ENCODE measurements at regions of chr9 and their contacts with region 1.

Region 1: DNA sequence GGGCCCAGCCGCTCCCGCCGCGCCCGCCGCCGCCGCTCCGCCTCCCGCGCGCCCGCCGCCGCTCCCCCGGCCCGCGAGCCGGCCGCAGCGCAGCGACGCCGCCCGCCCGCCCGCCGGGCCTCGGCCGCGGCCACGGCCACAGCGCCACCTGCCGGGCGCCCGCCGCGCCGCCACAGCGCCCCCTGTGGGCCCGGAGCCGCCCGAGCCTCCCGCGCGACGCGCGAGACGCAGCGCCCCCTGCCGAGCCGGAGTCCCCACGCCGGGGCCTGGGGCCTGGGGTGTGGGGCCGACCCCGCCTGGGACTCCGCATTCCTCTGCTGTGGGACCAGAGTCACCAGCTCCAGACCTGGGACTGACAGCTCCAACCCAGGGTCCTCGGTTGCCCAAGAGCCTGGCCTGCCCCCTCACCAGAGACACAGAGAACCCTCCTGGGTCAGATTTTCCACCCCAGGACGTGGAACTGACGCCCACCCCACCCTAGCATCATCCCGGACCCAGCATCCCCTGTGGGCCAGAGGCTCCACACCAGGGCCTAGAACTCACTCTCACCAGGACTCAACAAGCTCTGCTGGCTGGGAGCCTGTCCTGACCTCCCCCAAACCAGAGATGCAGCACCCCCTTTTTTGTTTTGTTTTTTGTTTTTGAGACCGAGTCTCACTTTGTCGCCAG is at the start of gene RAPGEF1:
- H3K4me3 Mint-ChIP-seq: peak within 1 kb of the TSS; percentile 93
- H3K27ac Mint-ChIP-seq: peak within 1 kb of the TSS; percentile 87
- H3K4me1 Mint-ChIP-seq: peaks cover 58% of the 10 kb centered on the region
- H3K27me3 Mint-ChIP-seq: no peaks in the 10 kb centered on the region

Region 2: GRCh38 chr9:131590908-131591844 is 148.9 kb before region 1 on chr9:
- intact Hi-C with region 1: loop called (anchors 2 kb)
- H3K4me3 Mint-ChIP-seq: no peak overlapping the region
- H3K27ac Mint-ChIP-seq: peak overlapping the region; percentile 64
- H3K4me1 Mint-ChIP-seq: peaks cover 90% of the 10 kb centered on the region
- H3K27me3 Mint-ChIP-seq: no peaks in the 10 kb centered on the region

Region 3: GRCh38 chr9:131608493-131609037 is 131.5 kb before region 1 on chr9:
- intact Hi-C with region 1: no loop called
- H3K4me3 Mint-ChIP-seq: no peak overlapping the region
- H3K27ac Mint-ChIP-seq: peak overlapping the region; percentile 62
- H3K4me1 Mint-ChIP-seq: peaks cover 88% of the 10 kb centered on the region
- H3K27me3 Mint-ChIP-seq: no peaks in the 10 kb centered on the region

Region 4: GRCh38 chr9:131678499-131679111 is 61.5 kb before region 1 on chr9:
- intact Hi-C with region 1: loop called (anchors 10 kb)
- H3K4me3 Mint-ChIP-seq: no peak overlapping the region
- H3K27ac Mint-ChIP-seq: peak overlapping the region; percentile 79
- H3K4me1 Mint-ChIP-seq: peaks cover 94% of the 10 kb centered on the region
- H3K27me3 Mint-ChIP-seq: no peaks in the 10 kb centered on the region

Region 5: GRCh38 chr9:131697097-131697496 is 43.0 kb before region 1 on chr9:
- intact Hi-C with region 1: loop called (anchors 5 kb)
- H3K4me3 Mint-ChIP-seq: no peak overlapping the region
- H3K27ac Mint-ChIP-seq: peak overlapping the region; percentile 84
- H3K4me1 Mint-ChIP-seq: peaks cover 95% of the 10 kb centered on the region
- H3K27me3 Mint-ChIP-seq: no peaks in the 10 kb centered on the region

Region 6: GRCh38 chr9:131773911-131774379 is 33.8 kb after region 1 on chr9:
- intact Hi-C with region 1: no loop called
- H3K4me3 Mint-ChIP-seq: no peak overlapping the region
- H3K27ac Mint-ChIP-seq: no peak overlapping the region
- H3K4me1 Mint-ChIP-seq: no peaks in the 10 kb centered on the region
- H3K27me3 Mint-ChIP-seq: peaks cover 16% of the 10 kb centered on the region

Region 7: DNA sequence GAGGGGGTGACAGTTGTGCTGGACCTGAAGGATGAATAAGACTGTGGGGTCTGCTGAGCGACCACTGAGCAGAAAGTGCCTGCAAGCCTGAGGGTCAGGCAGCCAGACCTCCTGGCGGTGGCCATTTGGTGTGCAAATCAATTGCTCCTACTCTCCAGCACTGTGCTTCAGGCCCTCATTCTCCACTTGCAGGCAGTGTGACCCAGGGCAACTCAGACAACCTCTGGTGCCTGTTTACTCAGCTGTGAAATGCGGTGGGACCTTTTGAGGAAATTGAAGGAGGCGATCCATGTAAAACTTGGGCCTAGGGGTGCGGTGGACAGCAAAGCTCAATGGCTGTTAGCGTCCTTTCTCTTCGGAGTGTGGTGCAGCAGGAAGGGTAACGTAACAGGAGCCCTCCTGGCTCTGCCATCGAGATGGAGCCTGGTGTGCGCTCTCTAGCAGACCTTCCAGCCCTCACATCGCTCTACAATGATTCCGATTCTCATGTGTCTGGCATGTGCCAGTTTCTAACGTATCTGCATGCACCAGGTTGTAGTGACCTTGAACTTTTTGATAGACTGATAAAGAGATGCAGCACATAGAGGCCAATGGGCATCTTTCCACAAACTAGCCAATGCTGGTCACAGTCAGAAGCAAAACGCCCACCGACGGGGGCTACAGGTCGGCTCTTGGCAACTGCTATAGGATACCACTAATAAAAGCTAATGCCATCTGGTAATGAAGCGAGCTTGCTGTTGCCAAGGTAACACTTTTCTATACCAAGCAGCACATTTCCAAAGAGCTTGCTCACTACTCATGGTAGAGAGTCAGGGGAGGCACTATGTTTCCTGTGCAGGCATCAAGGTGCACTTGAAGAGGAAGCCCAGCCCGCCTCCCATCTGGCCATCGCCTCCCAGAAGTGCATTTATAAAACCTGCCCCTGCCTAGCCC is 159.4 kb after region 1 on chr9:
- intact Hi-C with region 1: no loop called
- H3K4me3 Mint-ChIP-seq: no peak overlapping the region
- H3K27ac Mint-ChIP-seq: no peak overlapping the region
- H3K4me1 Mint-ChIP-seq: no peaks in the 10 kb centered on the region
- H3K27me3 Mint-ChIP-seq: no peaks in the 10 kb centered on the region

Measured in dendritic cell treated with granulocyte-macrophage colony-stimulating factor and Interleukin-4, amounts not matched to agents 40 ng/mL and 50 ng/mL, for 4 days (primary cell).